PC-3 (cell line): ENCODE measurements at regions of chr11 and their contacts with region 1.

Region 1: DNA sequence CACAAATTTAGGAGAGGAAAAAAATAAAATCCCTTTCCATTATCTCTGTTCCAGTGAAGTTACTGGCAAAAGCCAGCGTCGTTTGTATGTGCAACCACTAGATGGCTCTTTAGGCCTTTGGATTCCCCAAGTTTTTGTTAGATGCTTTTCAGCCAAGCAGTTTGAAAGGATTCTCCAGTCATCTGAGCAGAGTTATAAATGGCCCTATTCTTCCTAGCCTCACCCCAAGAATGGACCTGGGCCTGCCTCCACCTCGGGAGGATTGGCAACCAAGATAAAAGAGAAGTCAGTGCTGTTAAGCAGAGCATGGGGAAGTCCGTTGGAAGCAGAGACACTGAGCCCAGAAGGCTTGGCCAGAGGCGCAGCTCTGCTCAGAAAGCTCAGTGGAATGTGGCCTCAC is 15.4 kb downstream of the FAM181B start:
- DNase-seq: peak; percentile 76
- ATAC-seq: peak; percentile 71
- H3K4me3 ChIP-seq: no peak overlapping the region
- H3K27ac ChIP-seq: no peak overlapping the region
- H3K4me1 ChIP-seq: no peaks in the 10 kb centered on the region
- H3K27me3 ChIP-seq: no peaks in the 10 kb centered on the region
- CTCF ChIP-seq: peak; percentile 95

Region 2: GRCh38 chr11:82775736-82776346 is 57.5 kb after region 1 on chr11:
- CTCF ChIA-PET with region 1: no interaction called
- POLR2A ChIA-PET with region 1: no interaction called
- intact Hi-C with region 1: loop called (anchors 1 kb)
- DNase-seq: peak; percentile 89
- ATAC-seq: peak; percentile 96
- H3K4me3 ChIP-seq: no peak overlapping the region
- H3K27ac ChIP-seq: no peak overlapping the region
- H3K4me1 ChIP-seq: peaks cover 13% of the 10 kb centered on the region; the same call in 1 of the 2 replicates
- H3K27me3 ChIP-seq: no peaks in the 10 kb centered on the region
- CTCF ChIP-seq: peak; percentile 93

Region 3: GRCh38 chr11:82900277-82901164 is 182.2 kb after region 1 on chr11 and contains the start of gene PRCP:
- CTCF ChIA-PET with region 1: no interaction called
- POLR2A ChIA-PET with region 1: no interaction called
- intact Hi-C with region 1: loop called (anchors 1 kb)
- DNase-seq: peak; percentile 96
- ATAC-seq: peak; percentile 88
- H3K4me3 ChIP-seq: peak within 1 kb of the TSS; percentile 83
- H3K27ac ChIP-seq: peak within 1 kb of the TSS; percentile 9
- H3K4me1 ChIP-seq: peaks cover 22% of the 10 kb centered on the region
- H3K27me3 ChIP-seq: no peaks in the 10 kb centered on the region
- CTCF ChIP-seq: no peak
- total RNA-seq, gene PRCP: 36.6 and 51.5 TPM in 2 replicates

Region 4: GRCh38 chr11:83044958-83045712 is 326.8 kb after region 1 on chr11:
- CTCF ChIA-PET with region 1: no interaction called
- POLR2A ChIA-PET with region 1: no interaction called
- intact Hi-C with region 1: loop called (anchors 2 kb)
- DNase-seq: peak; percentile 95
- ATAC-seq: peak; percentile 96
- H3K4me3 ChIP-seq: peak overlapping the region; percentile 37; the same call in 1 of the 2 replicates
- H3K27ac ChIP-seq: peak overlapping the region; percentile 70
- H3K4me1 ChIP-seq: peaks cover 45% of the 10 kb centered on the region
- H3K27me3 ChIP-seq: no peaks in the 10 kb centered on the region
- CTCF ChIP-seq: no peak

Region 5: DNA sequence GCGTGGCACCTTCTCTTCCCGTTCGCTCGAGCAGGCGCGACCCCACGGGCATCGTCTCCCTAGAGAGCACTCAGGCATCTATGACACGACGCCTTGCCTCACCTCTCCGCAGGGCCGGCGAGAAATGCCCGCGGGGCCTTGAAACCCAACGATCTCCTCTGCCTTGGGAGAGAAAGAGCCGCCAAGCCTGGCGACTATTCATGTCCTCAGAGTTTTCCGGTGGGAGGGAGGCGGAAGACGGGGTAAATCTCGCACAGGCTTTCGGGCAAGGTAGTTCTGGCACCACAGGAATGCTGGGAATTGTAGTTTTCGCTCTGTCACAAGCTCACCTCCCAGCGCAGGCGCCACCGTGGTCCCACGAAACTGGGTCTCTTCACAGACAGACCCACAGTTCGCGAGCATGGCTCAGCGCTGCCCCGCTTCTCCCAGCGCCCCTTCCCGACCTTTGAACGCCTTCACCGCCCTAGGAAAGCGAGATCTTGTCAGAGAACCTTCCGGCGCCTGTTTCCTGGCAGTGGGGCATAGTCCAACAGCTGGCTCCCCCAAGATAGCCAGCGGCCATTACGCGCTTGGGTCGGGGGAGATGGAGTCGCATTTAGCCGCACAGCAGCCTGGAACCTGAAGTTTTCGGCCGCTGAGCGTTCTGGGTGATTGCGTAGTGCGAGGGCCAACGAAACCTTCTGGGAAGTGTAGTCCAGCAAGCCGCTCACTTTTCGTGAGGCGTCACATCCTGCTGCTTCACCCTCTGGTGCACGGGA is 567.6 kb after region 1 on chr11 and contains the start of gene CCDC90B:
- CTCF ChIA-PET with region 1: no interaction called
- POLR2A ChIA-PET with region 1: no interaction called
- intact Hi-C with region 1: loop called (anchors 10 kb)
- DNase-seq: peak; percentile 99
- ATAC-seq: peak; percentile 85
- H3K4me3 ChIP-seq: peak within 1 kb of the TSS; percentile 83
- H3K27ac ChIP-seq: peak within 1 kb of the TSS; percentile 82
- H3K4me1 ChIP-seq: peaks cover 33% of the 10 kb centered on the region
- H3K27me3 ChIP-seq: no peaks in the 10 kb centered on the region
- CTCF ChIP-seq: no peak
- total RNA-seq, gene CCDC90B: 59.4 and 70.8 TPM in 2 replicates